ENCODE measurements at regions of chr4 and their contacts with region 1.

Region 1: GRCh38 chr4:74675673-74676279 is 118.5 kb downstream of the BTC start:
- DNase-seq: peak in 5 of 9 donors; percentile 26 to 31 (median 30)
- ATAC-seq: peak; percentile 70
- H3K4me3 ChIP-seq: no peak overlapping the region
- H3K4me3 Mint-ChIP-seq: peak overlapping the region in 1 of 10 donors; percentile 1
- H3K27ac ChIP-seq: no peak overlapping the region
- H3K27ac Mint-ChIP-seq: no peak overlapping the region
- H3K4me1 ChIP-seq: no peaks in the 10 kb centered on the region
- H3K4me1 Mint-ChIP-seq: peaks cover 0 to 12% (median 10%) of the 10 kb centered on the region in 7 donors
- H3K27me3 ChIP-seq: no peaks in the 10 kb centered on the region
- H3K27me3 Mint-ChIP-seq: peaks cover 10 to 28% (median 14%) of the 10 kb centered on the region in 5 donors

Region 2: GRCh38 chr4:74083546-74083945 is 592.2 kb before region 1 on chr4:
- CTCF ChIA-PET with region 1: no interaction called
- POLR2A ChIA-PET with region 1: no interaction called
- intact Hi-C with region 1: no loop called
- DNase-seq: no peak
- ATAC-seq: no peak
- H3K4me3 ChIP-seq: no peak overlapping the region
- H3K4me3 Mint-ChIP-seq: no peak overlapping the region
- H3K27ac ChIP-seq: no peak overlapping the region
- H3K27ac Mint-ChIP-seq: no peak overlapping the region
- H3K4me1 ChIP-seq: no peaks in the 10 kb centered on the region
- H3K4me1 Mint-ChIP-seq: peaks cover 0 to 5% (median 0%) of the 10 kb centered on the region in 7 donors
- H3K27me3 ChIP-seq: no peaks in the 10 kb centered on the region
- H3K27me3 Mint-ChIP-seq: peaks cover 0 to 19% (median 12%) of the 10 kb centered on the region in 5 donors

Region 3: DNA sequence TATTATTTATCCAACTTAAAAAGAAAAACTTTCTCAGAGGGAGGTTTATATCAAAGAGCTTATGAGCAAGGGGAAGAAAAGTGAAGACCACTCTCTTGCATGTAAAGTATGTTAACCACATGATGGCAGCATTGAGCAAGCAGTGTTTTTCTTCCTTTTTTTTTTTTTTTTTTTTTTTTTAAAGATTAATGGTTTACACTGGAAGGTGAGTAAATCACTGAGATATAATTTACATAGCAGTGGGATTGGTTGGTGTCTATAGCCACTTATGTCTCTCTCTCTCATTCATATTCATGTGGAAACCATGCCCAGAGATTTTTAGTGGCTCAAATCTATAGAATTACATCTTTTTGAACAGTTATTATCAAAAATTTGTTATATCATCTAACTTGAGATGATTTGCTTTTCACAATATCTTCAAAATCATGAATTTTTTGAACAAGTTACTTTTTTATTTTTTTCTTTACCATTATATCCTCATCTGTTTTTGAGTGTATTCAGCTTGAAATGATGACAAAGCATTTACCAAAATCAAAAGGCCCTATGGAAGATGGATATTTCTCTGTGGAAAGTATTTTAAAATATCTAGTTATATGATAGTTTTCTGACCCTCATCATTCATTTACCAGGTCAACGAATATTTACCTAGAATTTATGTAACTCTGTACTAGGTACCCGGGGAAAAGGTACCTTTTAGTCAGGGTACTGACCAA is 486.3 kb before region 1 on chr4:
- CTCF ChIA-PET with region 1: no interaction called
- POLR2A ChIA-PET with region 1: no interaction called
- intact Hi-C with region 1: loop called (anchors 1 to 5 kb)
- DNase-seq: peak in 5 of 9 donors; percentile 17 to 45 (median 34)
- ATAC-seq: peak; percentile 68
- H3K4me3 ChIP-seq: no peak overlapping the region
- H3K4me3 Mint-ChIP-seq: no peak overlapping the region
- H3K27ac ChIP-seq: no peak overlapping the region
- H3K27ac Mint-ChIP-seq: no peak overlapping the region
- H3K4me1 ChIP-seq: no peaks in the 10 kb centered on the region
- H3K4me1 Mint-ChIP-seq: no peaks in the 10 kb centered on the region
- H3K27me3 ChIP-seq: no peaks in the 10 kb centered on the region
- H3K27me3 Mint-ChIP-seq: peaks cover 0 to 2% (median 0%) of the 10 kb centered on the region in 5 donors

Region 4: GRCh38 chr4:74320559-74321118 is 355.1 kb before region 1 on chr4:
- CTCF ChIA-PET with region 1: no interaction called
- POLR2A ChIA-PET with region 1: no interaction called
- intact Hi-C with region 1: loop called (anchors 1 kb)
- DNase-seq: peak in 6 of 9 donors; percentile 17 to 35 (median 24)
- ATAC-seq: peak; percentile 82
- H3K4me3 ChIP-seq: no peak overlapping the region
- H3K4me3 Mint-ChIP-seq: no peak overlapping the region
- H3K27ac ChIP-seq: no peak overlapping the region
- H3K27ac Mint-ChIP-seq: no peak overlapping the region
- H3K4me1 ChIP-seq: no peaks in the 10 kb centered on the region
- H3K4me1 Mint-ChIP-seq: peaks cover 0 to 6% (median 0%) of the 10 kb centered on the region in 7 donors
- H3K27me3 ChIP-seq: no peaks in the 10 kb centered on the region
- H3K27me3 Mint-ChIP-seq: peaks cover 4 to 23% (median 19%) of the 10 kb centered on the region in 5 donors

Region 5: GRCh38 chr4:74376888-74377483 is 298.8 kb before region 1 on chr4:
- CTCF ChIA-PET with region 1: interaction called, 39 read pairs
- POLR2A ChIA-PET with region 1: no interaction called
- intact Hi-C with region 1: loop called (anchors 1 kb)
- DNase-seq: peak in 7 of 9 donors; percentile 25 to 60 (median 48)
- ATAC-seq: peak; percentile 73
- H3K4me3 ChIP-seq: no peak overlapping the region
- H3K4me3 Mint-ChIP-seq: no peak overlapping the region
- H3K27ac ChIP-seq: no peak overlapping the region
- H3K27ac Mint-ChIP-seq: no peak overlapping the region
- H3K4me1 ChIP-seq: no peaks in the 10 kb centered on the region
- H3K4me1 Mint-ChIP-seq: no peaks in the 10 kb centered on the region
- H3K27me3 ChIP-seq: no peaks in the 10 kb centered on the region
- H3K27me3 Mint-ChIP-seq: peaks cover 0 to 16% (median 8%) of the 10 kb centered on the region in 5 donors

Region 6: DNA sequence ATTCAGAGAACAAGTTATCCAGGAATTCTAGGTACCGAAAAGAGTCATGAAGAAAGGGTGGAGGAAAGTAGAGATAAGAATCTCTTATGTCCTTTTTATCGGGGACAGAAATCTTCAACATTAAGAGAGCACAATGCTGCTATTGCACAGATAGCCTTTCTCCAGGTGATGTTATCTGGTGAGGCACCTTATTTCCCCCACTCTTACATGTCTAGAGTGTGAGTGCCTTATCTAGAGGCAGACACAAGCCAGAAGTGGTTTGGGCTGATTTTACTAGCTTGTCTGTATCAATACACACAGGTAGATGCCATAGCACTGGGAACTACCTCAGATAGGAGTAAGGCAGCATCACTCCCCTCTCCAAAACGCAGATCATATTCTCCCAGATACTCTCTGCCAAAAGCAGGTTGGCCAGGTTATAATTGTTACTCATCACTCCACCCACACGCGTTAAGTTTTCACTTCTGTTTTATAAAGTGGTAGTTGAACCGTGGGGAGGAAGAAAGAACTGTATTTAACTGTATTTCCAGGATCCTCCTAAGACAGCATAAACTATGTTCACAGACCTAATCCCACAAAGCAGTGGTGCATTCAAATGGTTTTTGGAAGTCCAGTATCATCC is 192.4 kb before region 1 on chr4:
- CTCF ChIA-PET with region 1: no interaction called
- POLR2A ChIA-PET with region 1: no interaction called
- intact Hi-C with region 1: no loop called
- DNase-seq: no peak
- ATAC-seq: no peak
- H3K4me3 ChIP-seq: no peak overlapping the region
- H3K4me3 Mint-ChIP-seq: no peak overlapping the region
- H3K27ac ChIP-seq: no peak overlapping the region
- H3K27ac Mint-ChIP-seq: no peak overlapping the region
- H3K4me1 ChIP-seq: no peaks in the 10 kb centered on the region
- H3K4me1 Mint-ChIP-seq: no peaks in the 10 kb centered on the region
- H3K27me3 ChIP-seq: no peaks in the 10 kb centered on the region
- H3K27me3 Mint-ChIP-seq: peaks cover 2 to 21% (median 8%) of the 10 kb centered on the region in 5 donors

Region 7: GRCh38 chr4:74623041-74623440 is 52.7 kb before region 1 on chr4:
- CTCF ChIA-PET with region 1: interaction called, 5 read pairs
- POLR2A ChIA-PET with region 1: no interaction called
- intact Hi-C with region 1: loop called in 1 of 2 experiments (anchors 1 kb)
- DNase-seq: peak in 6 of 9 donors; percentile 4 to 47 (median 34)
- ATAC-seq: peak; percentile 70
- H3K4me3 ChIP-seq: no peak overlapping the region
- H3K4me3 Mint-ChIP-seq: peak overlapping the region in 2 of 10 donors; percentile 0 to 29
- H3K27ac ChIP-seq: no peak overlapping the region
- H3K27ac Mint-ChIP-seq: peak overlapping the region in 2 of 9 donors; percentile 4 to 8
- H3K4me1 ChIP-seq: peaks cover 0 to 20% of the 10 kb centered on the region in 2 donors
- H3K4me1 Mint-ChIP-seq: peaks cover 7 to 48% (median 37%) of the 10 kb centered on the region in 7 donors
- H3K27me3 ChIP-seq: no peaks in the 10 kb centered on the region
- H3K27me3 Mint-ChIP-seq: peaks cover 0 to 5% (median 0%) of the 10 kb centered on the region in 5 donors